Endothelial cell of umbilical vein (primary cell): ENCODE measurements at regions of chr9 and their contacts with region 1.

Region 1: DNA sequence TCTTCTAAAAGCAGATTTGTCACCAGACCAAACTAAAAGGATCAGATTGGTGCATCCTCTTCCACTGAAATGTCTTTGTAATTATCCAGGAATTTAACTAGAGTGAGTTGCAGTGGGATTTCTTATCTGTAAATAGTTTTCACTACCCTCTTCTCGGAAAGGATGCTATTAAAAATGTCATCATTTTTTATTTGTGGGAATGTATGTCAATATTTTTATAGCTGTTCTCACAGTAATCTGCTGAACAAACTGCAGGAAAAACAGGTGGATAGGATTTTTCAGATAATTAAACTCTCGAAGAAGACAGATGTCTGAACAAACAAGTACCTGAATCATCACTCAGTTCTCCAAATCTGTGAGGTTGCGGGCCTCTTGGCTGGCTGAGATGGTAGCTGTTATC is 62.7 kb downstream of the RAB14 start:
- DNase-seq: no peak
- H3K4me3 ChIP-seq: no peak overlapping the region
- H3K27ac ChIP-seq: no peak overlapping the region
- H3K4me1 ChIP-seq: no peaks in the 10 kb centered on the region
- H3K27me3 ChIP-seq: no peaks in the 10 kb centered on the region
- CTCF ChIP-seq: no peak
- POLR2A ChIP-seq: no peak

Region 2: GRCh38 chr9:121023064-121023463 is 115.9 kb before region 1 on chr9:
- CTCF ChIA-PET with region 1: no interaction called
- POLR2A ChIA-PET with region 1: interaction called, 10 read pairs
- dilution Hi-C with region 1: no loop called
- intact Hi-C with region 1: no loop called
- DNase-seq: no peak
- H3K4me3 ChIP-seq: no peak overlapping the region
- H3K27ac ChIP-seq: no peak overlapping the region
- H3K4me1 ChIP-seq: no peaks in the 10 kb centered on the region
- H3K27me3 ChIP-seq: no peaks in the 10 kb centered on the region
- CTCF ChIP-seq: no peak
- POLR2A ChIP-seq: no peak

Region 3: DNA sequence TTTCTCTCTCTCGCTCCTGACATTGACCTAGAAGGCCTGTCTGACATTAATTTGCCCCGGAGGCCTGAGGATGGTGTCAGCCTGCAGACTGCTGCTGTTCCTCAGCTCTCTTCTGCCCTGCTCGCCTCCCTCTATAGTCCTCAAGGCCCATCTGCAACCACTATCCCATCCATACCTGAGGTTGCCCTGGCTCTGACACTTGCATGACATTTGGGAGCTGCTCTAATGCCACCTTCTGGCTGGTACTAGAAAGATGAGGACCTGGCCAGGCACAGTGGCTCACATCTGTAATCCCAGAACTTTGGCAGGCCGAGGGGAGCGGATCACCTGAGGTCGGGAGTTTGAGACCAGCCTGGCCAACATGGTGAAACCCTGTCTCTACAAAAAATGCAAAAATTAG is 399.3 kb after region 1 on chr9:
- CTCF ChIA-PET with region 1: no interaction called
- POLR2A ChIA-PET with region 1: no interaction called
- dilution Hi-C with region 1: no loop called
- intact Hi-C with region 1: no loop called
- DNase-seq: no peak
- H3K4me3 ChIP-seq: no peak overlapping the region
- H3K27ac ChIP-seq: no peak overlapping the region
- H3K4me1 ChIP-seq: no peaks in the 10 kb centered on the region
- H3K27me3 ChIP-seq: peaks cover 2 to 5% of the 10 kb centered on the region in 2 experiments
- CTCF ChIP-seq: no peak
- POLR2A ChIP-seq: no peak